Lower lobe of right lung (tissue), 2 donors: ENCODE measurements at regions of chr11 and their contacts with region 1.

Region 1: GRCh38 chr11:117843666-117844484 is 19.3 kb upstream of the FXYD2 start:
- DNase-seq: peak; percentile 84
- ATAC-seq: peak; percentile 80 to 85
- H3K4me3 ChIP-seq: no peak overlapping the region
- H3K27ac ChIP-seq: no peak overlapping the region
- H3K4me1 ChIP-seq: peaks cover 16% of the 10 kb centered on the region
- H3K27me3 ChIP-seq: no peaks in the 10 kb centered on the region
- CTCF ChIP-seq: peak; percentile 99

Region 2: DNA sequence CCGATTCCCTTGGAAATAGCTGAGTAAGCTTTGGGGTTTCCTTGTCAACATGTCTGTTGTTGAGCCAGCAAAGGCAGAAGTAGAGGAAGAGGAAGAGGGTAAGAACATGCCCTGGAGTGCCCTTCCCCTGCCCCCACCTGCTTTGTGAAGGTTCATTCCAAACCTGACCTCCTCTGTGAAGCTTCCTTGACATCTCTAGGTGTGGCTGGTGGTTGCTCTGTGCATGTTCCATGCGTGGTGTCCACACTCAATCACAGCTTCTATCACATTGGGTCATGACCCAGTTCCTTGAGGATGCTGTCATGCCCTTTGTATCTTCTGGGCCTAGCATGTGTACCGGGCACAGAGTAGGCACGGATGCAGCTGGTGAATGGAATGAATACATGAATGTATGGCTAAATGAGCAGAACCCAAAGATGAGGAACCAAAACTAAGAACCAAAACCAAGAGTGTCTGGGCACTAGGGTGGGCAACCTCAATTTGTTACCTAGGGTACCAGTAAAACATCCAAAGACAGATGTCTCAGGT is 56.3 kb after region 1 on chr11:
- intact Hi-C with region 1: no loop called
- DNase-seq: no peak
- ATAC-seq: peak in 1 of 2 donors; percentile 47
- H3K4me3 ChIP-seq: no peak overlapping the region
- H3K27ac ChIP-seq: no peak overlapping the region
- H3K4me1 ChIP-seq: no peaks in the 10 kb centered on the region
- H3K27me3 ChIP-seq: no peaks in the 10 kb centered on the region
- CTCF ChIP-seq: no peak

Region 3: DNA sequence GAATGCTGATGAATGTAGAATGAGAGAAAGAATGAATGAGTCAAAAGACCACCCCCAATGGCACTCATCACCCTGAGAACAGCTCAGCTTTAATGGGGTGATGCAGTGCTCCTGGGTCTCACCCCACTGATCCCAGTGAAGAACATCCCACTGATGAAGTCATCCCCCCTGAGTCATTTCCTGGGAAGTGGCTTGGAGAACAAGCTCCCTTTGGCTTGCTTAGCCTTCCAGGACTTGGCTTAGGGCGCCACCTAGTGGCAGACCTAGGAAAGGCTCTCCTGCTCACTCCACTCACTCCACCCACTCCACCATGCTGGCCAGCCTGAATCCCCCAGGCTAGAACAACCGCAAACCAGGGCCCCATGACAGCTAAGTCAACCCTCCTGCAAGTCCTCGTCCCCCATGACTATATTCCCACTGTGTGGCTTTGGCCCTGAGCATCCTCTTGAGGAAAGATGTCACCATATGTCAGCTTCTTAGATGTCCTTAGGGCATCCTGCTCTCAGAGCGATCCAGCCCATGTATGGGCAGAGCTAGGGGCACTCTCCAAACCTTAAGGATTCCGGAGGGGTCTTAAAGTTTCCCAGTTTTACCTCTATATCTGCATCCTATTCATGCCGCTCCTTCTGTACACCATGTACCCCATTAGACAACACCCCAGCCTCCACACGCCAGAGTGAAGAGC is 103.1 kb after region 1 on chr11:
- intact Hi-C with region 1: loop called (anchors 10 kb)
- DNase-seq: peak; percentile 89
- ATAC-seq: peak; percentile 93 to 94
- H3K4me3 ChIP-seq: no peak overlapping the region
- H3K27ac ChIP-seq: no peak overlapping the region
- H3K4me1 ChIP-seq: peaks cover 48% of the 10 kb centered on the region
- H3K27me3 ChIP-seq: no peaks in the 10 kb centered on the region
- CTCF ChIP-seq: peak; percentile 99